Right ventricle myocardium superior (tissue), 1 donor: ENCODE measurements at regions of chr5 and their contacts with region 1.

Region 1: DNA sequence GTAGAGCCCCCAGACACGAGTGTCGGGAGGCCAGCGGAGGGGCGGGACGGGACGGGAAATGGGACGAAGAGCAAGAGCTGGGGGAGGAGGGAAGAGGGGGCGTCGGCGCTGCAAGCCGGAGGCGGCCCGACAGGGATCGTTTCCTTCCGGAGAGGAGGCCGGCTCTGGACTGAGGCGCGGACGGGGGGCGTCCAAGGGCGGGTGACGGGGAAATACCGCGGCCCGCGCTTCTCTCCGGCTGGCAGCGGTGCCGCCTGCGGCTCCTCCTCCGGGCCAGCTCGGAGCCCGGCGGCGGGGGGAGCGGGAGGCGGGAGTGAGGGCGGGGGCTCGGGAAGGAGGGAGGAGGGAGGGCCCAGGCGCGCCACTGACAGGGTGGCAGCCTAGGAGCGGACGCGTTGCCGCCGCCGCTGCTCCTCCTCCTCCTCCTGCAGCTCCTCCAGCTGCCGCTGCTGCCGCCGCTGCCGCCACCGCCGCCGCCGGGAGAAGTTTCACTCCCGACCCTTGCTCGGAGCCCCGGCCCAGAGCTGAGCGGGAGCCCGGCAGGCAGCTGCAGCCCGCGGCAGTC is at the start of gene CHSY3:
- DNase-seq: peak; percentile 89
- ATAC-seq: peak; percentile 98
- total RNA-seq, gene CHSY3: 0.51 TPM

Region 2: GRCh38 chr5:130141659-130142320 is 237.6 kb after region 1 on chr5:
- intact Hi-C with region 1: loop called (anchors 10 kb)
- DNase-seq: no peak
- ATAC-seq: no peak

Region 3: GRCh38 chr5:131109540-131110255 is 1205.5 kb after region 1 on chr5:
- intact Hi-C with region 1: loop called (anchors 10 kb)
- DNase-seq: no peak
- ATAC-seq: peak; percentile 62